Activated B cell treated with CpG ODN at 0.5 μM for 24 hours (primary cell): ENCODE measurements at regions of chr14 and their contacts with region 1.

Region 1: DNA sequence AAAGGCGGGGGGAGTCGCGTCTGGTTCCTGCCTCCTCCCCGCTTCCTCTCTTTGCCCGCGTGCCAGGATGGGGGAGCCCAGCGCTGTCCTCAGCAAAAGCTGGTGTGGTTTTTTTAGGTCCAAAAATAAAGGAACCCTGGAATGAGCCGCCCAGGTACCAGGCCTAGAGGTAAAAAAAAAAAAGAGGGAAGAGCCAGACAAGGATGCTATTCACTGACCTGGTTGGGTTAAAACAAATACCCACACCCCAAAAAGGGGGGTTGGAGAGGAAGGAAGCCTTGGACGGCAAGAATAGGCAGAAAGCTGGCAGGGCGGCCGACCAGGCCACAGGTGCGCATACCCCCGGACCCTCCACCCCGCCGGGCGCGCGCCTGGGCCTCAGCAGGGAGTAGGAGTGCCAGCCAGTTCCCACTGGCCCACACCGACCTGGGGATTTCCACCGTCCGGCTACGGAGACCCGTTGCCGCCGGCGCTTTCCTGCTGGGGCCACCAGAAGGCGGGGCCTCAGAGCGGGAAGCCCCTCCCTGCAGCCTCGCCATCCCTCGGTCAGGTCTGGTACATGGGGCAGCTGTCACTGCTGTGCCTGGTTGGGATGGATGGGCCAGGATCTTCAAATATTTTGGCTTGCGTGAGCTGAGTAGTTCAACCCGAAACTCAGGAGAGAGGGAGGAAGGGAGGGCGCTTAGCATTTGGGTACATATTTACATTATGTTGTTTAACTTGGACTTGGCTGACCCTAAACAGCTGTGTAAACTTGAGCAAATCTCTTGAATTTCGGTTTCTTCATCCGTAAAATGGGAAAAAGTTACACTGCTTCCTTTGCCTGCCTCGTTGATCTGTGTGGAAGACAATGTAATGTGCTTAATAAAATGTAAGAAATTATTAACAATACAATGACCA is 5.4 kb upstream of the IRF2BPL start:
- DNase-seq: peak; percentile 74
- ATAC-seq: peak; percentile 82
- H3K4me3 Mint-ChIP-seq: peak overlapping the region; percentile 88
- H3K27ac Mint-ChIP-seq: peak overlapping the region; percentile 97
- H3K4me1 Mint-ChIP-seq: peaks cover 67% of the 10 kb centered on the region
- H3K27me3 Mint-ChIP-seq: no peaks in the 10 kb centered on the region
- CTCF ChIP-seq: no peak

Region 2: GRCh38 chr14:76904740-76905438 is 129.0 kb before region 1 on chr14:
- CTCF ChIA-PET with region 1: no interaction called
- POLR2A ChIA-PET with region 1: interaction called, 16 read pairs
- intact Hi-C with region 1: no loop called
- DNase-seq: peak; percentile 73
- ATAC-seq: peak; percentile 92
- H3K4me3 Mint-ChIP-seq: peak overlapping the region; percentile 63
- H3K27ac Mint-ChIP-seq: peak overlapping the region; percentile 93
- H3K4me1 Mint-ChIP-seq: peaks cover 39% of the 10 kb centered on the region
- H3K27me3 Mint-ChIP-seq: no peaks in the 10 kb centered on the region
- CTCF ChIP-seq: no peak

Region 3: GRCh38 chr14:76977793-76978720 is 55.8 kb before region 1 on chr14:
- CTCF ChIA-PET with region 1: no interaction called
- POLR2A ChIA-PET with region 1: interaction called, 31 read pairs
- intact Hi-C with region 1: no loop called
- DNase-seq: peak; percentile 74
- ATAC-seq: peak; percentile 96
- H3K4me3 Mint-ChIP-seq: peak overlapping the region; percentile 63
- H3K27ac Mint-ChIP-seq: peak overlapping the region; percentile 88
- H3K4me1 Mint-ChIP-seq: peaks cover 31% of the 10 kb centered on the region
- H3K27me3 Mint-ChIP-seq: no peaks in the 10 kb centered on the region
- CTCF ChIP-seq: no peak

Region 4: GRCh38 chr14:77023001-77023996 is 10.6 kb before region 1 on chr14:
- CTCF ChIA-PET with region 1: no interaction called
- POLR2A ChIA-PET with region 1: interaction called, 140 read pairs
- intact Hi-C with region 1: no loop called
- DNase-seq: no peak
- ATAC-seq: no peak
- H3K4me3 Mint-ChIP-seq: no peak overlapping the region
- H3K27ac Mint-ChIP-seq: peak overlapping the region; percentile 4
- H3K4me1 Mint-ChIP-seq: peaks cover 36% of the 10 kb centered on the region
- H3K27me3 Mint-ChIP-seq: no peaks in the 10 kb centered on the region
- CTCF ChIP-seq: no peak

Region 5: GRCh38 chr14:77593501-77593961 is 559.7 kb after region 1 on chr14:
- CTCF ChIA-PET with region 1: no interaction called
- POLR2A ChIA-PET with region 1: interaction called, 14 read pairs
- intact Hi-C with region 1: no loop called
- DNase-seq: no peak
- ATAC-seq: peak; percentile 72
- H3K4me3 Mint-ChIP-seq: peak overlapping the region; percentile 78
- H3K27ac Mint-ChIP-seq: peak overlapping the region; percentile 95
- H3K4me1 Mint-ChIP-seq: peaks cover 90% of the 10 kb centered on the region
- H3K27me3 Mint-ChIP-seq: no peaks in the 10 kb centered on the region
- CTCF ChIP-seq: no peak